ENCODE measurements at regions of chr19 and their contacts with region 1.

Region 1: GRCh38 chr19:46621191-46622117 is 3.4 kb downstream of the PTGIR start:
- DNase-seq: no peak
- H3K4me3 ChIP-seq: no peak overlapping the region
- H3K27ac ChIP-seq: no peak overlapping the region
- H3K4me1 ChIP-seq: peaks cover 0 to 10% (median 4%) of the 10 kb centered on the region in 4 experiments; a peak in 4 of 7 replicates
- H3K27me3 ChIP-seq: no peaks in the 10 kb centered on the region
- CTCF ChIP-seq: peak; percentile 36 to 69 (median 45)
- EP300 ChIP-seq: no peak
- POLR2A ChIP-seq: no peak
- RAD21 ChIP-seq: peak; percentile 21 to 45; a peak in 3 of 4 replicates

Region 2: GRCh38 chr19:46607448-46607841 is 14.0 kb before region 1 on chr19:
- CTCF ChIA-PET with region 1: interaction called, 309 read pairs
- POLR2A ChIA-PET with region 1: interaction called, 7 read pairs
- DNase-seq: no peak
- H3K4me3 ChIP-seq: no peak overlapping the region
- H3K27ac ChIP-seq: no peak overlapping the region
- H3K4me1 ChIP-seq: peaks cover 0 to 17% (median 7%) of the 10 kb centered on the region in 4 experiments; a peak in 5 of 7 replicates
- H3K27me3 ChIP-seq: no peaks in the 10 kb centered on the region
- CTCF ChIP-seq: no peak
- EP300 ChIP-seq: no peak
- POLR2A ChIP-seq: no peak
- RAD21 ChIP-seq: no peak